ENCODE measurements at regions of chr17 and their contacts with region 1.

Region 1: GRCh38 chr17:3859940-3860339 is 13.9 kb upstream of the NCBP3 start:
- DNase-seq: no peak
- ATAC-seq: no peak
- H3K4me3 ChIP-seq: no peak overlapping the region
- H3K27ac ChIP-seq: no peak overlapping the region
- H3K4me1 ChIP-seq: peaks cover 0 to 3% (median 0%) of the 10 kb centered on the region in 12 donors
- H3K27me3 ChIP-seq: no peaks in the 10 kb centered on the region
- CTCF ChIP-seq: no peak
- POLR2A ChIP-seq: no peak

Region 2: DNA sequence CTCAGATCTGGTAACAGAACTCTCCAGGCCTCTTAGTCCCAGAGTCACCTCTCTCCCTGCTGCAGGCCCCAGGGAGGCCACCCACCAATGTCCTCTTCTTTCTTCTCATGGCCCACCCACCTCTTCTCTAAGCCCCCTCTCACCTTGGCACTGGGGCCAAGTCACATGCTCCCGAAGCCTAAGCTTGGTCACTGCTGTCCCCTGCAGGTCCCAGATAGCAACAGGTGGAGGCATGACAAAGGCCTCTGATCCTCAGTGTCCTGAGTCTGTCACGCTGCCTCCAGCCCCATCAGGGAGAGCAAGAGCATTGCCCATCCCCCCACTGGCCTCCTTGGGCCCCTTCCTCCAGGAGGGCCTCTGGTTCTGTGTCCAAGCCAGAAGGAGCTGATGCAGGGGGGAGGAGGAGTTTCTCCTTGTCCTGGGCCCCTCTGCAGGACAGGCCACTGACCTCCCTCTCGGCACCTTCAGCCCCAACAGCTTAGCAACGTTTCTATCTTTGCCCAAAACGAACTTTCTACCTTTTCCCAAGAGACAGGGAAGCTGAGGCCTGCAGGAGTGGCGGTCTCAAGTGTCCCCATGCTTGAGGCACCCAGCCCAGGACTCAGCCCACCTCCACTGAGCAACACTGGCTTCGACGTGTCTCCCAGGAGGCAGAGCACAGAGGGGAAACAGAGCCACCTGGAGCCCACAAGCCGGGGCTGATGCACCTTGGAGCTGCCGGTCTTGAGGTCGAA is 47.7 kb after region 1 on chr17:
- intact Hi-C with region 1: loop called in 9 of 10 experiments (anchors 2 to 5 kb)
- DNase-seq: no peak
- ATAC-seq: peak in 1 of 4 donors; percentile 36
- H3K4me3 ChIP-seq: no peak overlapping the region
- H3K27ac ChIP-seq: no peak overlapping the region
- H3K4me1 ChIP-seq: peaks cover 0 to 13% (median 3%) of the 10 kb centered on the region in 12 donors
- H3K27me3 ChIP-seq: no peaks in the 10 kb centered on the region
- CTCF ChIP-seq: peak; percentile 4 to 42 (median 28)
- POLR2A ChIP-seq: no peak

Region 3: GRCh38 chr17:3913531-3914311 is 53.8 kb after region 1 on chr17:
- intact Hi-C with region 1: loop called in 8 of 10 experiments (anchors 2 to 5 kb)
- DNase-seq: peak; percentile 77 to 88 (median 83)
- ATAC-seq: peak; percentile 56 to 79 (median 70)
- H3K4me3 ChIP-seq: peak overlapping the region in 2 of 12 donors; percentile 12 to 53
- H3K27ac ChIP-seq: peak overlapping the region in 3 of 12 donors; percentile 9 to 79 (median 41)
- H3K4me1 ChIP-seq: peaks cover 3 to 52% (median 31%) of the 10 kb centered on the region in 12 donors
- H3K27me3 ChIP-seq: no peaks in the 10 kb centered on the region
- CTCF ChIP-seq: peak; percentile 92 to 99 (median 96)
- POLR2A ChIP-seq: no peak

Region 4: GRCh38 chr17:3956327-3956957 is 96.5 kb after region 1 on chr17:
- intact Hi-C with region 1: no loop called
- DNase-seq: no peak
- ATAC-seq: no peak
- H3K4me3 ChIP-seq: no peak overlapping the region
- H3K27ac ChIP-seq: no peak overlapping the region
- H3K4me1 ChIP-seq: peaks cover 0 to 33% (median 12%) of the 10 kb centered on the region in 12 donors
- H3K27me3 ChIP-seq: no peaks in the 10 kb centered on the region
- CTCF ChIP-seq: no peak
- POLR2A ChIP-seq: no peak